Calu3 (cell line): ENCODE measurements at regions of chr3 and their contacts with region 1.

Region 1: GRCh38 chr3:177906126-177906511 is 630.1 kb upstream of the KCNMB2 start:
- DNase-seq: peak; percentile 24
- H3K4me3 Mint-ChIP-seq: no peak overlapping the region
- H3K27ac Mint-ChIP-seq: peak overlapping the region; percentile 36
- H3K4me1 Mint-ChIP-seq: peaks cover 26% of the 10 kb centered on the region
- H3K27me3 Mint-ChIP-seq: no peaks in the 10 kb centered on the region
- CTCF ChIP-seq: no peak

Region 2: DNA sequence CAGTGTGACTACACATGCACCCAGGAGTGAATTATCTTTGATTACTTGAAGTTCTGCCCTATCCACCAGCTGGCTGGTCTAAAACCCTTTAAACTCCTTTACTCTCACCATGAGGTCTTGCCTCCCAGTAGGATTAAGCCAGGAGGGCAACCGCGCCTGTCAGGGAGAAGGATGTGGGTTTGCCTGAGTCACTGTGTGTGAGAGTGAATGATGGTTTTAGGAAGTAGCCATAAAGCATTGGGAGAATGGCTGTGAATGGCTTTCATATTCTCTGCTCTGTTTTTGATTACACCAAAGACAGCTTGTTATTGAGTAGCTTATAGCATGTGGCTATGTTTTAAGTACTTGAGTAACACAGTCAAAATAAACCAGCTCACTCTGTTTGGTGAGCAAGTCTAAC is 71.1 kb before region 1 on chr3:
- CTCF ChIA-PET with region 1: interaction called, 3 read pairs
- intact Hi-C with region 1: loop called (anchors 2 kb)
- DNase-seq: peak; percentile 70
- H3K4me3 Mint-ChIP-seq: no peak overlapping the region
- H3K27ac Mint-ChIP-seq: peak overlapping the region; percentile 1
- H3K4me1 Mint-ChIP-seq: peaks cover 50% of the 10 kb centered on the region
- H3K27me3 Mint-ChIP-seq: no peaks in the 10 kb centered on the region
- CTCF ChIP-seq: no peak

Region 3: DNA sequence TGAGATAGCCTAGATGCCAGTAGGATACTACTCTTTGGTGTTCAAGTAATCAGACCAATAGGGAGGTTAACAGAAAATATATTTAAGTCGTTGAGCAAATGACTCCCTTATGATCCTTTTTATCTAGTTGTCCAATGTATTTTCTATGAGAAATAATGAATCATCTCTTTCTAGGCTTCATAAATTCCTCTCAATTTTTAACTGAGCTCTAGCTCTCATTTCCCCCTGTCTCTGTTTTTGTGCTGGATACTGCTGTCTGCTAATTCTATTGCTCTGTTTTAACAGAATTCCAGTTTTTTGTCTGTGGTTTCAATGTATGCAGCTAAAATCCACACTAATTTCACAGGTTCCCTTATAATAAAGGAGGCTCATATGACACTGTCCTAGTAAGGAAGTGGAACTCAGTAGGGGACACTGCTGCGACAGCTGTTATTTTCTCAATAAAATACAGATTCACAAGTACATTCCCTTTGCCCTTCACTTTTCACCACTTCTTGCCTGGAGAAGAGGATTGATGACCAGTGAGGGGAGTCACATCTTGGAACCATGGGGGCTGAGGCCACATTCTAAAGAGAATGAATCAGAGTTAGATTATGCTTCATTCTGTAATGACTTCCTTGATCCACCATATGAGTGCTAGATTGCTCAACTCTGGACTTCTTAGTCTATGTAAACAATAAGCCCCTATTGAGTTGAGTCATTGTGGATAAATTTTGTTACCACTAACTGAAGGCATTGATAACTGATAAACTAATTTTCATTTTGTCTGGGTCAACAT is 71.5 kb after region 1 on chr3:
- CTCF ChIA-PET with region 1: no interaction called
- intact Hi-C with region 1: no loop called
- DNase-seq: peak; percentile 39
- H3K4me3 Mint-ChIP-seq: no peak overlapping the region
- H3K27ac Mint-ChIP-seq: peak overlapping the region; percentile 59
- H3K4me1 Mint-ChIP-seq: peaks cover 37% of the 10 kb centered on the region
- H3K27me3 Mint-ChIP-seq: no peaks in the 10 kb centered on the region
- CTCF ChIP-seq: no peak

Region 4: GRCh38 chr3:178500631-178501030 is 594.5 kb after region 1 on chr3:
- CTCF ChIA-PET with region 1: no interaction called
- intact Hi-C with region 1: no loop called
- DNase-seq: no peak
- H3K4me3 Mint-ChIP-seq: no peak overlapping the region
- H3K27ac Mint-ChIP-seq: no peak overlapping the region
- H3K4me1 Mint-ChIP-seq: no peaks in the 10 kb centered on the region
- H3K27me3 Mint-ChIP-seq: no peaks in the 10 kb centered on the region
- CTCF ChIP-seq: no peak

Region 5: GRCh38 chr3:178718995-178719635 is 813.0 kb after region 1 on chr3:
- CTCF ChIA-PET with region 1: no interaction called
- intact Hi-C with region 1: no loop called
- DNase-seq: no peak
- H3K4me3 Mint-ChIP-seq: no peak overlapping the region
- H3K27ac Mint-ChIP-seq: no peak overlapping the region
- H3K4me1 Mint-ChIP-seq: no peaks in the 10 kb centered on the region
- H3K27me3 Mint-ChIP-seq: no peaks in the 10 kb centered on the region
- CTCF ChIP-seq: no peak